Activated B cell treated with CpG ODN at 0.5 μM for 24 hours (primary cell): ENCODE measurements at regions of chr15 and their contacts with region 1.

Region 1: DNA sequence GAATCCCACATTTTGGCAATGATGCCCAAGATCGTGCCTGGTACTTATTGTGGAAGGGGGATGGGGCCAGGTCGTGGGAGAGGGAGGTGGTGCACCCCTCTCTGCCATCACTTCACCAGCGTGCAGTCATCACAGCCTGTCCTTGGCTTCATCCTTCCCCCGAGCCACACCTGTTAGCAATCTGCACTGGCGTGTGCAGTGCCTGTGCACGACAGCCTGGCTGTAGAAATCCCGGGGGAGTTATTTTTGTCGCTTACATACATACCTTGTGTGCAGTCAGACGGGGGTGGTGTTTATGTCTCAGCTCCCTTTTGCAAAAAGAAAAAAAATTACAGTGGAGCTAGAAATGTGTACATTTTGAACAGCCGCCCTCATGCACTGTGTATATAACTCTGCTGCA is 216.0 kb downstream of the TLE3 start:
- DNase-seq: peak; percentile 54
- ATAC-seq: peak; percentile 94
- H3K4me3 Mint-ChIP-seq: peak overlapping the region; percentile 73
- H3K27ac Mint-ChIP-seq: peak overlapping the region; percentile 82
- H3K4me1 Mint-ChIP-seq: peaks cover 36% of the 10 kb centered on the region
- H3K27me3 Mint-ChIP-seq: peaks cover 3% of the 10 kb centered on the region
- CTCF ChIP-seq: no peak

Region 2: GRCh38 chr15:69591905-69592508 is 289.8 kb before region 1 on chr15:
- CTCF ChIA-PET with region 1: no interaction called
- POLR2A ChIA-PET with region 1: no interaction called
- intact Hi-C with region 1: no loop called
- DNase-seq: no peak
- ATAC-seq: no peak
- H3K4me3 Mint-ChIP-seq: no peak overlapping the region
- H3K27ac Mint-ChIP-seq: no peak overlapping the region
- H3K4me1 Mint-ChIP-seq: peaks cover 4% of the 10 kb centered on the region
- H3K27me3 Mint-ChIP-seq: peaks cover 28% of the 10 kb centered on the region
- CTCF ChIP-seq: no peak

Region 3: GRCh38 chr15:69679623-69680228 is 202.0 kb before region 1 on chr15:
- CTCF ChIA-PET with region 1: no interaction called
- POLR2A ChIA-PET with region 1: no interaction called
- intact Hi-C with region 1: loop called (anchors 5 kb)
- DNase-seq: peak; percentile 44
- ATAC-seq: peak; percentile 93
- H3K4me3 Mint-ChIP-seq: no peak overlapping the region
- H3K27ac Mint-ChIP-seq: peak overlapping the region; percentile 68
- H3K4me1 Mint-ChIP-seq: peaks cover 25% of the 10 kb centered on the region
- H3K27me3 Mint-ChIP-seq: peaks cover 23% of the 10 kb centered on the region
- CTCF ChIP-seq: no peak

Region 4: DNA sequence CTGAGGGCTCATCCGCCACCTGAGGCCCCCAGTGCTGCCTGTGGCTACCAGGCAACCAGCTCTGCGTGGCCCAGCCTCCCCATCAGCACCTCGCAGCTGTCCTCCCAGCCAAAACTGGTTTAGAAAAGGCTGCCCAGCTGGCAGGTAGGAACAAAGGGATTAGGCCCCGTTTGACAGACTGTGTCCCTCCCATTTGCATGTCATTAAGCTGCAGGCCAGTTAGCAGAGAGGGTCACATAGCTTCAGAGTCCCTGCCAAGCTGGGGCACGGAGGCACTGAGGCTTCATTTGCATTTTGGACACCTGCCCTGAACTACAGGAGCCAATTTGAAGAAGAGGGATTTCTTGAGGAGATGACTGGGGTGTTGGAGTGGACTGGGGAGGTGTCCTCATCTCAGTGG is 38.0 kb after region 1 on chr15:
- CTCF ChIA-PET with region 1: no interaction called
- POLR2A ChIA-PET with region 1: interaction called, 9 read pairs
- intact Hi-C with region 1: loop called (anchors 5 kb)
- DNase-seq: no peak
- ATAC-seq: no peak
- H3K4me3 Mint-ChIP-seq: no peak overlapping the region
- H3K27ac Mint-ChIP-seq: peak overlapping the region; percentile 24
- H3K4me1 Mint-ChIP-seq: peaks cover 45% of the 10 kb centered on the region
- H3K27me3 Mint-ChIP-seq: no peaks in the 10 kb centered on the region
- CTCF ChIP-seq: no peak

Region 5: DNA sequence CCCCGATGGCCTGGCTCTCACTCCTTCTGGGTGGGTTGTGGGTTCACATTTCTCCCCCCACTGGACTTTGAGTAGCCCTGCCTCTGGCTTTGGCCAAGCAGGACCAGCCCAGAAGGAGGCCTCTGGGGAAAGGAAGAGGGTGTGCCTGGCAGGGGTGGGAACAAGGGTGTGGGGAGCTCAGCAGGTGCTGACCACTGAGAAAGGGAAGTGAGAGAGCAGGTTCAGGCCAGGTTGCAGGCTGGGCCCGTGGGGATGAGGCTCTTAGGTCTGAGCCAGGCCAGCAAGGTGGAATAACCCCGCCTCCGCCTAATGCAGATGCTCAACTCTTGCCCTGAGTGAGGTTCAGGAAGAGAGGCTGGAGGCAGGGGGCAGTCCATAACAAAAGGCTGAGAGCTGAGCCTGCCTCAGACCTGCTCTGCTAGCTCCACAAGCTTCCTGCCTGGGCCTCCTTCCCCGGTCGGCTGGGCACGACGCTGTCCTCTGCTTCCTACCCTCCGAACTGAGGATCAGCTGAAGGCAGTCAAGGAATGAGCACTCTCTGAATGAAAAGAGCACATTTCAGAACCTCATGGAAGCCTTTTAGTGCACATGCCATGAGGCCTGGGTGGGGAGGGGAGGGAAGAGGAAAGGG is 133.2 kb after region 1 on chr15:
- CTCF ChIA-PET with region 1: no interaction called
- POLR2A ChIA-PET with region 1: interaction called, 3 read pairs
- intact Hi-C with region 1: loop called (anchors 2 kb)
- DNase-seq: peak; percentile 50
- ATAC-seq: peak; percentile 70
- H3K4me3 Mint-ChIP-seq: peak overlapping the region; percentile 58
- H3K27ac Mint-ChIP-seq: peak overlapping the region; percentile 77
- H3K4me1 Mint-ChIP-seq: peaks cover 84% of the 10 kb centered on the region
- H3K27me3 Mint-ChIP-seq: no peaks in the 10 kb centered on the region
- CTCF ChIP-seq: no peak

Region 6: DNA sequence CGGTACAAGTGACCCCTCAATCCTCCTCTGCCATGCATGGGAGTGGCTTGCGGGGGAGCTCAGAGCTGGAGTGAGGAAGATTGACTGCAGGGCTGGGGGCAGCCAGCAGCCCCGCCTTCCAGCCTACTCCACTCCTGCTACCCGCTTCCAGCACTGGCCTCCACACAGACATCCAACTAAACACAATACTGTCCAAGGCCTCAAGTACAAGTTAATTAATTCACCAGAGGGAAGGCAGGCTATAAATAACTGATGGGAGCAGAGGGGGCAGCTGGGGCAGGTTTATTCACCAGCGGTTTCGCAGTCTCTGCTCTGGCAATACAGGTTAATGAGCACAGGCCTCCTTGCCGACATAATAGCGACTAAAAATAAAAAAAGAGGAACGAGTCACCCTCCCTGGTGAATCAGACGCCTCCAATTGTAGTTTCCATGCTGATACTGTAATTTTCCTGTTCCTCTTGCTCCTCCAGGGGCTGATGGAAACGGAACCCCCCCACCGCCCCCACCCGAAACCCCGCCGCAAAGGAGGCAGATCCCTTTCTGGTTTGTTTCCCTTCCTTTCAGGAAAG is 382.3 kb after region 1 on chr15:
- CTCF ChIA-PET with region 1: no interaction called
- POLR2A ChIA-PET with region 1: no interaction called
- intact Hi-C with region 1: loop called (anchors 5 kb)
- DNase-seq: no peak
- ATAC-seq: peak; percentile 51
- H3K4me3 Mint-ChIP-seq: peak overlapping the region; percentile 57
- H3K27ac Mint-ChIP-seq: peak overlapping the region; percentile 18
- H3K4me1 Mint-ChIP-seq: peaks cover 92% of the 10 kb centered on the region
- H3K27me3 Mint-ChIP-seq: no peaks in the 10 kb centered on the region
- CTCF ChIP-seq: no peak

Region 7: DNA sequence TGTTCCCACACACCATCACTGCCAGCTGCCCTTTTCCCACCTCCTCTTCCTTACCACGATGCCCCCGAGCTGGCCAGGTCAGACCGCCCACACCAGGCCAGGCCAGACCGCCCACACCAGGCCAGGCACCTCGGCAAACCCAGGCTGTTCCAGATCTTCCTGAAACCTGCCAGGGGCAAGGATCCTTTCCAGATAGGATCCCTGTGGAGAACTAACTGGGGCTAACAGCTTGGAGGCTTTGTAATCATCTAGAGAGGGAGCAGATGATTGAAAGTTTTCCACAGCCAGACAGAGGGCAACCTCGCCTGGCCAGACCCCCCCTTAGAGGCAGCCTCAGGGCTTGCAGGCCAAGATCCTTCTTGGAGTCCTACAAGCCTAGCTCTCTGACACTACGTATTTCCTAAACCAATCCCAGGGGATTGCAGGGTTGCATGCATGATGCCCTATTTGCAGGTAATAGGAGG is 503.3 kb after region 1 on chr15:
- CTCF ChIA-PET with region 1: no interaction called
- POLR2A ChIA-PET with region 1: no interaction called
- intact Hi-C with region 1: loop called (anchors 2 kb)
- DNase-seq: no peak
- ATAC-seq: no peak
- H3K4me3 Mint-ChIP-seq: no peak overlapping the region
- H3K27ac Mint-ChIP-seq: no peak overlapping the region
- H3K4me1 Mint-ChIP-seq: peaks cover 24% of the 10 kb centered on the region
- H3K27me3 Mint-ChIP-seq: no peaks in the 10 kb centered on the region
- CTCF ChIP-seq: no peak